BJ (cell line): ENCODE measurements at regions of chr13 and their contacts with region 1.

Region 1: DNA sequence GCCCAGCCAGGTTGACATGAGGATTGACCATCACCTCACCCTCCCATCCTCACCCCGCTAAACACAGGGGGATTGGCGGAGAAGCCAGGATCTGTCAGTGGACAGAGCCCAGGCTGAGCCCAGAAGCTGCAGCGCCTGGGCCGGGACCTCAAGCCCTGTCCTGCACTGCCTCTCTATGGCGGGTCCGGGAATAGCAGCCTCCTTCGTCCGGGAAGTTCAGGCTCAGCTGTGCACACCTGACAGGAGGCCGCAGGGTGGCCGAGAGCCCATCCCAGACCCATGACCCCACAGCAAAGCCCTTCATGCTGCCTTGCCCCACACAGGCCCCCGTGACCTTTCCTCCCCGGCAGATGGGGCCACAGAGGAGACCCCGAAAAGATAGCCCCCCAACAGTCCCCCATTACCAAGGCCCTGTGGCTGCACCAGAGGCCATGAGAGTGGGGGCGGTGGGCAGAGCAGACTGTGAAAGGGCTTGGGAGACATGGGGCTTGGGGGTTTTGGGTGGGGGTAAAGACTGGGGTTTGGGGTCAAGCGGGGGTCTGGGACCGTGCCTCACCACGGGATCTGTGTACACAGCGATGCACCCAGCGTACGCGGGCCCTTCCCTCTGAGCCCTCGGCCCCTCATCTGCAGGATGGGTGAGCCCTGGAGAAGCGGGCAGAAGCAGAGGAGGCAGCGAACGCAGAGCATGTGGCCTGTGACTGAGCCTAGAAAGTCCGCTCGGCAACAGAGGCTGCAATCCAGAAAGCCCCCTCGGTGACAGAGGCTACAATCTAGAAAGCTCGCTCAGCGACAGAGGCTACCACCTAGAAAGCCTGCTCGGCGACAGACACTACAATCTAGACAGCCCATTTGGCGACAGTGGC is 68.1 kb downstream of the SPACA7 start:
- DNase-seq: no peak
- H3K4me3 ChIP-seq: no peak overlapping the region
- H3K27me3 ChIP-seq: no peaks in the 10 kb centered on the region; the same call in 1 of the 2 replicates
- CTCF ChIP-seq: peak; percentile 86

Region 2: GRCh38 chr13:111474136-111475002 is 969.9 kb before region 1 on chr13:
- CTCF ChIA-PET with region 1: interaction called, 20 read pairs
- POLR2A ChIA-PET with region 1: no interaction called
- DNase-seq: no peak
- H3K4me3 ChIP-seq: no peak overlapping the region
- H3K27me3 ChIP-seq: no peaks in the 10 kb centered on the region
- CTCF ChIP-seq: peak; percentile 48